ENCODE measurements at regions of chr2 and their contacts with region 1.

Region 1: DNA sequence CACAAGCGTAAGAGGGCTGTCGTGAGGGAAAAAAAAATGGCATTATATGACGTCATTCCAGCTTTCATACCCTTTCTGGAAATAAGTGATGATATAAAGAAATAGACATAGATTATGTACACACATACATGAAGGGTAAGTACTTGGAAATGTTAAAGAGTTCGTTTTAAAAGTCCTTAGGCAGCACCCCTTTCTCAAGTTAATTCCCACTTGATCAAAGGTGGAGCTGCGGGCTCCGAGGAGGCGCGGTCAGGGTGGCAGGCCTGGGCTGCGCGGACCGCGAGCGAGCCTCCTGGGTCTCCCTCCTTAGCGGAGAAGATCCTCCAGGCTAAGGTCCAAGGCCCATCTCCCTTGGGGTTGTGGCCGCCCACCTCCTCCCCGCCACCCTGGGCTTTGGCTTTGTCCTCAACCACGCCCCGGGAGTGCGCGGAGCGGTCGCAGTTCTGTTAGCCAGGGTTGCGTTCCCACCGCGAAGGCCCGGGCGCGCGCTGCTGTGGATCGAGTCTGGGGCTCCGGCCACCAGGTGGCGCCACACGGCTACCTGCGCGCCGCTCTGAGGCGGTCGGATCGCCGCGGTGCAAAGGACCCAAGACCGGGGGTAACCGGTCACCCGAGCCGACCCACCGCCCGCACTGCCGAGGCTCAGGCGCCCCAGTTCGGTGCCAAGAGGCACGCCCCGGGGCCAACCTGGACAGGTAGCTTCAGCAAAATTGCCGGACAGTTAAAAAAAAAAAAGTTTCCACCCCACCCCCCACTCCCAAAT is 66.8 kb downstream of the HNRNPLL start:
- DNase-seq: peak; percentile 73
- H3K4me3 ChIP-seq: peak overlapping the region; percentile 27 to 31
- H3K27ac ChIP-seq: peak overlapping the region; percentile 32 to 58
- H3K4me1 ChIP-seq: no peaks in the 10 kb centered on the region
- H3K27me3 ChIP-seq: no peaks in the 10 kb centered on the region
- CTCF ChIP-seq: peak; percentile 81 to 96 (median 89)
- POLR2A ChIP-seq: no peak

Region 2: DNA sequence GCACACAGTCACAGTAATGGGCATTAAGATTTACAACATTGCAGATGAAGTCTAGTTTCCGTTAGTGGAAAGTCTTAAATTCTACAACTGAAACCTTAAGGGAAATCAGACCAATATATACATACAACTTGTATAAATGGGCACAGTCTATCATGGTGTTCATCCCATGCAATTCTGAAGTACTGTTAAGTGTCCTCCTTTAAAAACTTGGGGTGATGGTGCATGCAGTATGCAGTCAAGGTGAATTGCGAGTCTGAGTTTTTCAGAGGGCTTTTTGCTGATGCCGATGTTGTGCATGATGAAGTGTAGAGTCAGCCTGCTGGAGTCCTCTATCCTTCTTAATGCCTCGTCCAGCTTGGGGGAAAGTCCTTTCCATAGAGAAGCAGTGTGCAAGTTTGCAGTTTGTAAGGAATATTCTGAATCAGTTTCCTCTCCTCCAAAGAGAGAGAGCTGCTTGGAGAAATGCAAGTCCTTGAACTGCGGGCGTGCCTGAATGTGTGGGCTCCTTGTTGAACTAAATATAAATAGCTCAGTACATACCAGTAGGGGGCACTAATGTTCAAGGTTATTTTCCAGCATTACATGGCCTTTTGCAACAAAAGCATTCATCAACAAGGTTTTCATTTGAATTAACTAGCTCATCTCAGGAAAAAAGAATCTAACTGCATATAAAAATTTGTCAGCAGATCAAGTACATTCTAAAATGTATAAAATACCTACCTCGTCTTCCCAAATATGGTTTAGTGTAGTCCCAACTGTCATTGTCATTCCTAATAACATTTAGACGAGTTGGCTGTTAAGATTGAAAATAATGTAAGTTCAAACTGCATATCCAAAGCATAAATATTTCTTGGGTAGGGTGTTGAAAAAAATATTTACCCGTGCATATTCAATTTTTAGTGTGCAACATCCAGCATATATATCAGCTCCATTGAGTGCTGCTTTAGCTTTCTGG is 45.5 kb after region 1 on chr2:
- intact Hi-C with region 1: loop called (anchors 5 kb)
- DNase-seq: peak; percentile 41
- H3K4me3 ChIP-seq: no peak overlapping the region
- H3K27ac ChIP-seq: no peak overlapping the region
- H3K4me1 ChIP-seq: no peaks in the 10 kb centered on the region
- H3K27me3 ChIP-seq: no peaks in the 10 kb centered on the region
- CTCF ChIP-seq: peak; percentile 15 to 78 (median 74)
- POLR2A ChIP-seq: no peak

Region 3: GRCh38 chr2:38740851-38741731 is 205.2 kb after region 1 on chr2:
- intact Hi-C with region 1: loop called (anchors 5 kb)
- DNase-seq: no peak
- H3K4me3 ChIP-seq: no peak overlapping the region
- H3K27ac ChIP-seq: peak overlapping the region in 1 of 2 donors; percentile 34
- H3K4me1 ChIP-seq: peaks cover 3% of the 10 kb centered on the region
- H3K27me3 ChIP-seq: no peaks in the 10 kb centered on the region
- CTCF ChIP-seq: peak; percentile 35 to 95 (median 81)
- POLR2A ChIP-seq: no peak

Measured in prostate gland (tissue), 2 donors.